A549 (cell line): ENCODE measurements at regions of chr17 and their contacts with region 1.

Region 1: DNA sequence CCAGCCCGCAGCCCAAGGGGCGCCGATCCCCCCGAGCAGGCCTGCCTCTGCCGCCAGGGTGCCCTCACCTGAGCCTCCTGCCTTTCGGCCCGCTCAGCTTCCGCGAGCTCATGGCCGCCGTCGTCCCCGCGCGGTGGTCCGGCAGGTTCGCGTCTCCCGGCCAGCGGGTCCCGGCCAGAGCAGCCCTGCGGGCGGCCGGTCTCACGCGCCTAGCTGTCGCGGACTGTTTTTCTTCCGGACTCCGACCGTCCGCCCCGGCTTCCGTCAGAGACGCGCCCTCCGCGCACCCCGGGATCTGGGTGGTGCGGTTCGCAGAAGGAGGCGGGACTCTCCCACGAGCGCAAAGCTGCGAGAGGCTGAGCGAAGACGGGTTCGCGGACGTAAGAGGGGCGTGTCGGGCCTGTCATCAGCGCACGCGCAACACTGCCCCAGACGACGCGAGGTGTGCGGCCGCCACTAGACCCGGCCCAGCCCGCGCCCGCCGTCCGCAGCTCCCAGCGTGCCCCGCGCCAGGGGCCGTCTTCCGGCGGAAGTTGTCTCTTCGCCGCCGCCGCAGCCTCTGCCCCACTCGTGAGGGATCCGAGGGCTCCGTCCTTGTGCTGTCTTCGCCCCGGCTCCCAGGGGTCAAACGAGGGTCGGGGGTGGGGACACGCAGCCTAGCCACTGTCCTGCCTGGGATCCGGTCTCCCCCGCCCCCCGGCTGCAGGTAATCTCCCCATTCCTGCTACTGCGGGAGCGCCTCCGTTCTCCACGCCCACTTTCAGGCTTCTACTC is at the start of gene INPP5K:
- DNase-seq: peak; percentile 99
- ATAC-seq: peak; percentile 90 to 95
- H3K4me3 ChIP-seq: peak within 1 kb of the TSS; percentile 76
- H3K27ac ChIP-seq: peak within 1 kb of the TSS; percentile 95
- H3K4me1 ChIP-seq: peaks cover 12% of the 10 kb centered on the region; the same call in 2 of the 3 replicates
- CTCF ChIP-seq: no peak
- EP300 ChIP-seq: no peak
- POLR2A ChIP-seq: peak; percentile 91
- RAD21 ChIP-seq: no peak; a peak in 1 of 5 replicates
- polyA plus RNA-seq, gene INPP5K: 30.8 and 41.8 TPM in 2 replicates

Region 2: DNA sequence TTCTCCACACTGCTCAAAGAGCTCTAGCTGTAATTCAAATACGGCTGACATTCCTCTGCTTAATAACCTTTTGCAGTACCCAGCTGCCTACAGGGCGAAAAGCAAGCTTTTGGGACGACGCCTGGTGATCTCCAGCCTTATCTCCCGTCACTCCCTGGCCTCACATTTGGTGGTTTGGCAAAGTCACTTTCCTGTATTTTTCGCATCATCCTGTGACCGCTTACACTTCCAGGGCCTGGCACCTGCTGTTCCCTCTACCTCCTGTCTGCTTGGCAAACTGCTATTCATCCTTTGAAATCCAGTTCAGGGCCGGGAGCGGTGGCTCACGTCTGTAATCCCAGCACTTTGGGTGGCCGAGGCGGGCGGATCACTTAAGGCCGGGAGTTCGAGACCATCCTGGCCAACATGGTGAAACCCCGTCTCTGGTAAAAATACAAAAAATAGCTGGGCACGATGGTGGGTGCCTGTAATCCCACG is 249.1 kb before region 1 on chr17:
- CTCF ChIA-PET with region 1: interaction called, 11 read pairs
- POLR2A ChIA-PET with region 1: no interaction called
- DNase-seq: peak in 1 of 2 experiments; percentile 30
- ATAC-seq: peak in 1 of 2 experiments; percentile 5; a peak in 3 of 6 replicates
- H3K4me3 ChIP-seq: peak overlapping the region; percentile 59
- H3K27ac ChIP-seq: peak overlapping the region; percentile 90 to 93
- H3K4me1 ChIP-seq: peaks cover 11% of the 10 kb centered on the region; the same call in 2 of the 3 replicates
- CTCF ChIP-seq: no peak
- EP300 ChIP-seq: no peak
- POLR2A ChIP-seq: no peak
- RAD21 ChIP-seq: no peak

Region 3: GRCh38 chr17:1340371-1340770 is 176.2 kb before region 1 on chr17:
- CTCF ChIA-PET with region 1: interaction called, 11 read pairs
- POLR2A ChIA-PET with region 1: interaction called, 3 read pairs
- DNase-seq: no peak
- ATAC-seq: peak; percentile 43 to 52; a peak in 5 of 6 replicates
- H3K4me3 ChIP-seq: no peak overlapping the region
- H3K27ac ChIP-seq: no peak overlapping the region
- H3K4me1 ChIP-seq: no peaks in the 10 kb centered on the region
- CTCF ChIP-seq: no peak
- EP300 ChIP-seq: no peak
- POLR2A ChIP-seq: no peak
- RAD21 ChIP-seq: no peak

Region 4: DNA sequence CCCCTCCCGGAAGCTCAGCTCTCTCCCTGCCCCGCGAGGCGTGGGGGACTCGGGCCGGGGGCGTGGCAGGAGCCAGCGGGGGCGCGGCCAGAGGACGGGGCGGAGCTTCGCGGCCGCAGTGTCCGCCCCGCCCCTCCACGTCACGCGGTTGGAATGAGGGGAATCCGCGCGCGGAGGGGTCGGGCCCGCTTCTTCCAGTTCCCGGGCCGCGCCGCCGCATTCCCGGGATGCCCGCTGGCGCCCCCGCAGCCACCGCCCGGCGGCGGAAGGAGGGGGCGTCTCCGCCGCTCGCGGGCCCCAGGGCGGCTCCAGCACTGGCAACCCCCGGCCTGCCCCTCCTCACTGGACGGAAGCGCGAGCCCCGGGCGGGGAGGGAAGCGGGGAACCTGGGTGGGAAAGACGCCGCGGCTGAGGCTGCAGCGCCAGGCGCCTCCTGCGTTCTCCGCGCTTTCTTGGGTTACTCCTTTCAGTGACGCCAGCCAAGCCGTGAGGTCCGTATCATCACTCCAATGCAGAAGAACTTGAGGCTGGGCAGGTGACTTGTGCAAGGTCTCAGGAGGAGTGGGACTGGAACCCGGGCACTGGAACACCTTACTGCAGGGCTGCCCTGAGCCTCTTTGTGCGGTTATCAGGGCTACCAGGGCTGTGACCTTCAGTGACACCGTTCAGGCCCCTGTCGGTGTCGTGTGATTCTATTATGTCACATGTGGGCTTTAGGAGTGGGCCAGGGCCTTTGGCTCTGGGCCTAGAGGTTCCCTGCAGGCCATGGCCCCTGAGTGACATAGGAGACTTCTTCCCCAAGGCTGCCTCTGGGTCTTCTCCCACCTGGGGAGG is 28.3 kb before region 1 on chr17:
- CTCF ChIA-PET with region 1: interaction called, 27 read pairs
- POLR2A ChIA-PET with region 1: interaction called, 29 read pairs
- DNase-seq: peak; percentile 74 to 90
- ATAC-seq: peak; percentile 17 to 39
- H3K4me3 ChIP-seq: peak overlapping the region; percentile 82
- H3K27ac ChIP-seq: peak overlapping the region; percentile 97
- H3K4me1 ChIP-seq: peaks cover 61% of the 10 kb centered on the region
- CTCF ChIP-seq: 0 out of 3 replicates have a peak, but pooled peaks have one; percentile 16
- EP300 ChIP-seq: 0 out of 5 replicates have a peak, but pooled peaks of 1 of the 2 experiments have one; percentile 16
- POLR2A ChIP-seq: peak; percentile 31; the same call in 1 of the 2 replicates
- RAD21 ChIP-seq: no peak

Region 5: DNA sequence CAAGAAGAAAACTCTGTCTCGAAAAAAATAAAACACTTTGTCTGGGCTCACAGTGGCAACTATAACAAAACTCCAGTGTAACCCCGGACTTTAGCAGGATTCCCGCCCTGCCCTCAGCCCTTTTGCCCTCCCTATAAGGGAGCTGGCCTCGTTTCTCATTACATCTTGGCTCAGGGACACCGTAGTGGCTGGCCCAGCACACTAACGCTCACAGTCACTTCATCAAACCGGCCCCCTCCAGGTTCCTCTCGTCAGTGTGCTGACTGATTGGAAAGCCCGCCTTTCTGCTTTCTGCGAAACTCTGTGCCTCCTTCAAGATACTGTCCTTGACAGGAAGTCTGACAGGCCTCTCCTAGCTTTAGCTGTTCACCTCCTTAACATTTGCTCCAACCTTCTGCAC is 12.9 kb before region 1 on chr17:
- CTCF ChIA-PET with region 1: interaction called, 68 read pairs
- POLR2A ChIA-PET with region 1: interaction called, 19 read pairs
- DNase-seq: no peak
- ATAC-seq: no peak
- H3K4me3 ChIP-seq: no peak overlapping the region
- H3K27ac ChIP-seq: no peak overlapping the region
- H3K4me1 ChIP-seq: no peaks in the 10 kb centered on the region
- CTCF ChIP-seq: no peak
- EP300 ChIP-seq: no peak
- POLR2A ChIP-seq: no peak
- RAD21 ChIP-seq: no peak

Region 6: DNA sequence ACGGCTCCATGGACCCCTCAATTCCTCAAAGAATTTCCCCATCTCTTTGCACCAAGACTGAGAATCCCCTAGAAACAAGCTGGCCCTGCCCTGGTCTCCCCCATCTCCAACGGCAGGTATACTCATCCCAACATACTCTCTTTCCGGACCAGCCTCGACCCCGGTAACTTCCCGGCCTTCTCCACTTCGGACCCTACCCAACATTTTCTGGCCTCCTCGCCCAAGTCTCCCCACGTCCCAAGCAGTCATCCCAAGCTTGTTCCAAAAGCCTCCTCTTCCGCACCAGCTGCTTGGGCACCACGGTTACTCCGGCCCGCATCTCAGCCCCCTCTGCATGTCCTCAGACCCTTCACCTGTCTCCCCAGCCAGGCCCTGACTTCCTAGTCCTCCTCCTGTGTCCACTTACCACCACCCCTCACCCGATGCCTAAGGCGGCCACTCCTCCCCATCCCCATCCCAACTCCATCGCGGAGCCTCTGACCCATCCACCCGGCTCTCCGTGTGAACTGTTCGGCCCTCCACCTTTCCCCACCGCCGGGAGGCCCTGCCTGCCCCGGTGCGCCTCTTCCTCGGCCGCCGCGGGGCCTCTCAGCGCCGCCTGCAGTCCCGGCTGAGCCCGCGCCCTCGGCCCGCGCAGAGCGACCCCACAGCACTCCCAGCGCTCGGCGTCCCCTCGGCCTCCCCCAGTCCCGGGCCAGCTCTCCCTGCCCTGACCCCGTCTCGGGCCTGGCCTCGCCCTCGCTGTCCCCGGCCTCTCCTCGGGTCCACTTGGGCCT is 45.0 kb after region 1 on chr17:
- CTCF ChIA-PET with region 1: interaction called, 14 read pairs
- POLR2A ChIA-PET with region 1: interaction called, 9 read pairs
- DNase-seq: peak in 1 of 2 experiments; percentile 63
- ATAC-seq: peak; percentile 52 to 58
- H3K4me3 ChIP-seq: peak overlapping the region; percentile 91
- H3K27ac ChIP-seq: peak overlapping the region; percentile 94 to 97
- H3K4me1 ChIP-seq: peaks cover 16% of the 10 kb centered on the region; the same call in 2 of the 3 replicates
- CTCF ChIP-seq: peak; percentile 20; the same call in 1 of the 3 replicates
- EP300 ChIP-seq: no peak
- POLR2A ChIP-seq: no peak
- RAD21 ChIP-seq: 0 out of 5 replicates have a peak, but pooled peaks of 1 of the 2 experiments have one; percentile 13

Region 7: GRCh38 chr17:1583556-1583955 is 67.0 kb after region 1 on chr17:
- CTCF ChIA-PET with region 1: no interaction called
- POLR2A ChIA-PET with region 1: no interaction called
- DNase-seq: no peak
- ATAC-seq: no peak
- H3K4me3 ChIP-seq: no peak overlapping the region
- H3K27ac ChIP-seq: no peak overlapping the region
- H3K4me1 ChIP-seq: peaks cover 15% of the 10 kb centered on the region
- CTCF ChIP-seq: no peak
- EP300 ChIP-seq: no peak
- POLR2A ChIP-seq: no peak
- RAD21 ChIP-seq: no peak

Region 8: DNA sequence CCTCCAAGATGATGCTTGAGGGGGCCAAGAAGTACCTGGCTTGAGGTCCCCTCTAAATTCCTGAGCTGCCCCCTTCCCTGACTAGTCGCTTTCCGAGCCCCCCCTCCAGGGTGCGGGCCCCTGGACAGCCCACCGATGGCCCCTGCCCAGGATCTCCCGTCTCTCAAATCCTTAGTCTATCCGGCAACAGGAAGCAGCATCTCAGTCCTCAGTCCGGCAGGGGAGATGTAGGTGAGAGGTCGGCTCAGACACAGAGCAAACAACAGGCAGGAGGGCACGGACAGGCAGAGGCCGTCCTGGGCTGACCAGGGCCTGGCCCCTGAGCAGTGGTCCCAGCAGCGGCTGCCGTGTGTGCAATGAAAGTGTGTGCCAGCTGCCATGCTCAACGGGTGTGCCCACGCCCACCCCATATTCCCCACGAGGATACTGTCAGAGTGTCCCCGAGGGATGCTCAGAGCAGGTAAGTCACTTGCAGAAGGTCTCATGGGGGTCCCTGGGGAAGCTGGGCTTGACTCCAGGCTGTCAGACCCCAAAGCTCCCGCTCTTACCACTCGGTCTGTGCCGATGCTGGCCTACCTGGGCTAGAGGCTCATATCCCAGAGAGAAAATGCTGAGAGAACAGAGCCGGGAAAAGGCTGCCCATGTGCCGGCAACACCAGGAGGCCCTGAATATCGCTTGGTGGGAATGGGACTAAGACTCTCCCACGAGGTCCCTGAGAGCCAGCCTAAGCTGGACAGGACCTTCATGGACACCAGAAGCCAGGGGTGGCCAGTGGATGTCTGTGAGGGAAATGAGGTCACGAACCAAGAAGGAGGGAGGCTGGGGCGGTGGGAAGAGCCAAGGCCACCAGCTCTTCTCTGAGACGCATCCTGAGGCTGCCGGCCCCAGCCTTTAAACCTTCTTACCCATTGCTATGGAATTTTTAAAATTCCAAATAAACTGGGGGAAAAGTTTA is 105.0 kb after region 1 on chr17:
- CTCF ChIA-PET with region 1: no interaction called
- POLR2A ChIA-PET with region 1: no interaction called
- DNase-seq: no peak
- ATAC-seq: no peak
- H3K4me3 ChIP-seq: no peak overlapping the region
- H3K27ac ChIP-seq: no peak overlapping the region
- H3K4me1 ChIP-seq: peaks cover 17% of the 10 kb centered on the region
- CTCF ChIP-seq: no peak
- EP300 ChIP-seq: no peak
- POLR2A ChIP-seq: no peak
- RAD21 ChIP-seq: no peak